PC-3 (cell line): ENCODE measurements at regions of chr7 and their contacts with region 1.

Region 1: GRCh38 chr7:29408841-29409243 is 154.8 kb upstream of the PRR15 start:
- DNase-seq: peak; percentile 94
- ATAC-seq: peak; percentile 95
- H3K4me3 ChIP-seq: no peak overlapping the region
- H3K27ac ChIP-seq: no peak overlapping the region
- H3K4me1 ChIP-seq: peaks cover 3% of the 10 kb centered on the region; the same call in 1 of the 2 replicates
- H3K27me3 ChIP-seq: no peaks in the 10 kb centered on the region
- CTCF ChIP-seq: peak; percentile 88

Region 2: DNA sequence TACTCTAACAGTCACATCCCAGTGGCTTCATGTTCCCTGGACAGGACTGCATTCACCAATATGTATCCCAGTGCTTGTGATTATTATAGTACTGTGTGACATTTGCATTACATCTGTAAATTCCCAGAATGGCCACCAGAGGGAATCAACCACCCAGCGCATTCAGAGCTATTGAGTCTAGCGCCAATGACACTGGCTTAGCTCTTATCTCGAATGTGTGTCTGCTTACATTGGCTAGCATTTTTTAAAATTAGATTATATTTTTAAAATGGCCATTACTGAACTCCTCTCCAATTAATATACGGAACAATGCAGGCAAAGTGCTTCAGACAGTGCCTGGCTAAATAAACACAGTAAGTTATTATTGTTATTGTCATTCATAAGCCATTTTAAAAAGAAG is 487.0 kb before region 1 on chr7:
- CTCF ChIA-PET with region 1: interaction called, 19 read pairs
- POLR2A ChIA-PET with region 1: interaction called, 4 read pairs
- intact Hi-C with region 1: loop called (anchors 1 kb)
- DNase-seq: peak; percentile 81
- ATAC-seq: peak; percentile 89
- H3K4me3 ChIP-seq: 0 out of 2 replicates have a peak overlapping the region, but pooled peaks have one; percentile 7
- H3K27ac ChIP-seq: no peak overlapping the region
- H3K4me1 ChIP-seq: peaks cover 7% of the 10 kb centered on the region; the same call in 1 of the 2 replicates
- H3K27me3 ChIP-seq: no peaks in the 10 kb centered on the region
- CTCF ChIP-seq: peak; percentile 83

Region 3: DNA sequence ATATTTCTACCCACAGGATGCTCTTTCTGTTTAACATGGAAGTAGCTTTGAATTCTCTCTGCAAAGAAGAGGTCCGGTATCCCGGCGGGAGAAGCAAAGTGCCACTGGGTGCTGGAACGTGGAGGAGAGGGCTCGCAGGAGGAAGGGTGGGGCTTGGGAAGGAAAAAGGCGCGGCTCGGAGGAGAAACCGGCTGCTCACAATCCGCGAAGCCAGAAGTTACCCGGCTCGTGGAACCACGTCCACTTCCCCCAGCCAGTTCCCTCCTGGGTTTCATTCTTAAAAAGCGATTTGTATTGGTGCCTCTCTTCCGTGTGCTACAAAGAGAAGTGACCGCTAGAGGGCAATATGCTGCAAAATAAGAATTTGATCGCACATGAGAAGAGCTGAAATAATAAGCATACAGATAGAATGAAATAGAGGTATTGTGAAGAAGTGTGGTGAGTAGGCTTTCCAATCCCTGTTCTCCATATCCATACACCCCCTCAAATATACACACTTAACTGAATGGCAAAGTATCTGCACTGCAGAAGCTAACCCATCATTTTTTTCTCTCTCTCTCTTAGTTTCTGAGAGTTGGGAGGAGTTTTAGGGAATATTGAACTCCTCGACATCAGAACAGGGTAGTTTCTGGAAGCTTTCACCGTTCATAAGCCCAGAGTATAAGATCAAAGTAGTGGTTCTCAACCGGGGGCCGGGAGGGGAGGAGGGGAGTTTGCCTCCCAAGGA is 481.8 kb before region 1 on chr7:
- CTCF ChIA-PET with region 1: interaction called, 19 read pairs
- POLR2A ChIA-PET with region 1: no interaction called
- intact Hi-C with region 1: loop called (anchors 1 kb)
- DNase-seq: peak; percentile 96
- ATAC-seq: peak; percentile 96
- H3K4me3 ChIP-seq: peak overlapping the region; percentile 75
- H3K27ac ChIP-seq: no peak overlapping the region
- H3K4me1 ChIP-seq: peaks cover 5% of the 10 kb centered on the region; the same call in 1 of the 2 replicates
- H3K27me3 ChIP-seq: no peaks in the 10 kb centered on the region
- CTCF ChIP-seq: peak; percentile 87

Region 4: DNA sequence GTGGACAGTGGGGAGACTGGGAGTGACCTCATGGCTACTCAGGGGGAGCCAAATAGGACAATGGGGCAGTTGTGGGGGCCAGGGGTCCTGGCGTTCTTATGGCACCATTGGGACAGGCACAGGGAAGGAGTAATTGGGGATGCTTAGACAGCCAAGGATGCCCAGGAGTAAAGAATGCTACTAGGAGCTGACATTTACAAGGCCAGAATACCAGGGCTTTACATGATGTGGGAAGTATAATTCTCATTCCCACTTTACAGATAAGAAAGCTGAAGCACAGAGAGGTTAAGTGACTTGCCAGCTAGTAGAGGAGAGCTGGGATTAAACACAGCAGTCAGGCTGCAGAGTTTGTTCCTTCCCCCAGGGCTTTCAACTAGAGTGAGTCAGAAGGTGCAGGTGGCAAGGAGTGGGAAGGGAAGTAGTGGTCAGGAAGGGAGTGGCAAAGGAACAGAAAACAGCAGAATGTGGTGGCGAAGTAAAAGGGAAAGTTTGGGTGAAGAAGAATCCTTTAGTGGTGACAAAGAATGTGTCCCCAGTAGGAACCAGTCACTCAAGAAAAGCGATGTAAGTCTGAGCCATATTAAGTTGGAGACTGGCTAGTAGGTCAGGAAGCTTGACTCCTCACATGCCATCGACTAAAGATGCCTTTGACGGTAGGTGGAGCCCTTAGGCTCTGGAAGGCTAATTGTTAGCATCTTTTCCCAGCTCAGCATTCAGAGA is 295.3 kb before region 1 on chr7:
- CTCF ChIA-PET with region 1: interaction called, 9 read pairs
- POLR2A ChIA-PET with region 1: no interaction called
- intact Hi-C with region 1: loop called (anchors 1 kb)
- DNase-seq: peak; percentile 89
- ATAC-seq: peak; percentile 90
- H3K4me3 ChIP-seq: peak overlapping the region; percentile 1; the same call in 1 of the 2 replicates
- H3K27ac ChIP-seq: peak overlapping the region; percentile 76
- H3K4me1 ChIP-seq: peaks cover 51% of the 10 kb centered on the region
- H3K27me3 ChIP-seq: no peaks in the 10 kb centered on the region
- CTCF ChIP-seq: peak; percentile 74

Region 5: DNA sequence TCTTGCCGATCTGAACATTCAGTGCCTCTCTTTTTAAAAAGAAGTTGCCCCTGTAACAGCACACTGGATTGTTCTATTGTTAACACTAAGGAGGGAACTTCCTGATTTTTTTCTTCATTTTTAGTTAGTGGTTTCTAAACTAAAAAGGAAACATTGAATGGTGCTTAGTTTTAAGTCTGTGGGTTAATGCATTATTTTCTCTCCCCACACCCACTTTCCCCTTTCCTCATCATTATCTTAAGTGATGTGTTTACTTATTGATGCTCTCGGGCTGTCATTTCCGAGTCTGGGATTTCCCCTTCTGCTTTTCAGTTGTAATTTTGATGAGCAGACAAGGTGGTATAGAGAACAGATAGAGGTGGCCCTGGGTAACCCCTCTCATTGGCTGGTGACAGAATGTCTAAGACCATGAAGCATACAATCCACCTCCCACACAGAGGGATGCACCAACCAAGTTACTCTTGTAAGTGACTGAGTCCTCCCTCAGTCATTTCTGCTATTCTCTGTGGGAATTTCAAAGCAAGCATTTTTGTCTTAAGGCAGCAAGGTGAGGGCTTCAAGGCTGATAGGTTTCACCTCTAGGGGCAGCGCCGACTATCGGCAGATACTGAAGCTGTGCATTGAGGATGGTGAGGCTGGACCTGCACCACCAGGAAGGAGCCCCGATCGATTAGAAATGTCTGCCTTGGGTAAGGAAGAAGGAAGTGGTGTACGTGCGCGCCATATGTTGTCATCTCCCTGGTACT is 164.8 kb before region 1 on chr7:
- CTCF ChIA-PET with region 1: no interaction called
- POLR2A ChIA-PET with region 1: no interaction called
- intact Hi-C with region 1: no loop called
- DNase-seq: no peak
- ATAC-seq: no peak
- H3K4me3 ChIP-seq: no peak overlapping the region
- H3K27ac ChIP-seq: no peak overlapping the region
- H3K4me1 ChIP-seq: no peaks in the 10 kb centered on the region
- H3K27me3 ChIP-seq: no peaks in the 10 kb centered on the region
- CTCF ChIP-seq: peak; percentile 34; the same call in 1 of the 2 replicates

Region 6: DNA sequence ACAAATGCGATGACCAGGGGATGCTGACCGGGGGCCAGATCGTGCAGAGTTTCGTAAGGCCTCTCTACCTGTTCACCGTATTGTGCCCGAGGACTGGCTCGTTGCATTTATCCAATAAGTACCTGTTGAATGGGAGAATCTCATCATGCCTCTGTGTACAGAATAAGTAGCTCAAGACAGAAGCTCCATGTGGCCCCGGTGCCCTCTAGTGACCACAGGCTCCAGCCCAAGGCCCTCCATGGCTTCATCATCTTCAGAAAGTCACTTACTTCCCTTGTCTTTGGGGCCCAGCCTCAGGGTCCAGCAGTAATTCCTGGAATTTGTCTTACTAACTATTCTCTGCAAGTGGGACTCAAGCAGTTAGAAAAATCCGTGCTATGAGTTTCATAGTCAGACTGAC is 63.2 kb before region 1 on chr7:
- CTCF ChIA-PET with region 1: interaction called, 3 read pairs
- POLR2A ChIA-PET with region 1: no interaction called
- intact Hi-C with region 1: loop called (anchors 10 kb)
- DNase-seq: peak; percentile 57
- ATAC-seq: peak; percentile 53
- H3K4me3 ChIP-seq: no peak overlapping the region
- H3K27ac ChIP-seq: no peak overlapping the region
- H3K4me1 ChIP-seq: peaks cover 19% of the 10 kb centered on the region
- H3K27me3 ChIP-seq: no peaks in the 10 kb centered on the region
- CTCF ChIP-seq: peak; percentile 65

Region 7: DNA sequence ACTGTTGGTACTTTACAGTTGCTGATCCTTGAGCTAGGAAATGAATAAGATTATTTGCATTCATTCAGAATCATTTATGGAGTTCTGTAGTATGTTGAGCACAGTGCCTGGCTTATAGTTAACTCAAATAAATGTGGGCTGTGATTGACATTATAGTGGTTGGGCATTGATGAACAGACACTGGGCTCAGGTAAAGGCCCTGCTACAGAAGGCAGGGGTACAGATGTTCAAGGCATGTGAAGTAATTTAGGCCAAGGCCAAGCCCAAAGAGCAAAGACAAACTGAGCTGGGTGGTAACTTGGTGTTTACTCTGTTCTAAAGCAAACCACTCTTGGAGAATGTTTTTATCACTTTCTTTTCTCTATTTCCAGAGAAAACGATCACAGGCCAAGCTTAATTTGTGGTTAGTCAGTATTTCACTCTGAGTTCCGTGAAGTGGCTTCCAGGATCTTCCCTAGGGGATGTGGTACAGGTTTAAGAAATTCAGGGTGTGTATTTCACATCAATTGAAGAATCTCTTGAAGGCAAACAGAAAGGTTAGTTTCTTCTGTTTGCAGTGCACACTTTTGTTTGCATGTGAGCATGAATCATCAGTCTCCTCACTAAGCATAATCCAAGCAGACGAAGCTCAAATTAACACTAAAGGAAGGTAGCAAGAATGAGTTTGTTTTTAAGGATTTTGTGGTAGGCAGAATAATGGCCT is 40.9 kb after region 1 on chr7:
- CTCF ChIA-PET with region 1: interaction called, 4 read pairs
- POLR2A ChIA-PET with region 1: no interaction called
- intact Hi-C with region 1: loop called (anchors 2 kb)
- DNase-seq: peak; percentile 81
- ATAC-seq: peak; percentile 95
- H3K4me3 ChIP-seq: no peak overlapping the region; the same call in 1 of the 2 replicates
- H3K27ac ChIP-seq: peak overlapping the region; percentile 71
- H3K4me1 ChIP-seq: peaks cover 32% of the 10 kb centered on the region
- H3K27me3 ChIP-seq: no peaks in the 10 kb centered on the region
- CTCF ChIP-seq: no peak